A549 (cell line): ENCODE measurements at regions of chr7 and their contacts with region 1.

Region 1: GRCh38 chr7:124152859-124153692 is 120.2 kb upstream of the TMEM229A start:
- DNase-seq: peak; percentile 1 to 46
- ATAC-seq: peak; percentile 78 to 91; a peak in 5 of 6 replicates
- H3K4me3 ChIP-seq: no peak overlapping the region
- H3K27ac ChIP-seq: no peak overlapping the region
- H3K4me1 ChIP-seq: no peaks in the 10 kb centered on the region
- CTCF ChIP-seq: 0 out of 3 replicates have a peak, but pooled peaks have one; percentile 11
- EP300 ChIP-seq: no peak
- POLR2A ChIP-seq: no peak
- RAD21 ChIP-seq: peak in 1 of 2 experiments; percentile 34; a peak in 2 of 5 replicates

Region 2: DNA sequence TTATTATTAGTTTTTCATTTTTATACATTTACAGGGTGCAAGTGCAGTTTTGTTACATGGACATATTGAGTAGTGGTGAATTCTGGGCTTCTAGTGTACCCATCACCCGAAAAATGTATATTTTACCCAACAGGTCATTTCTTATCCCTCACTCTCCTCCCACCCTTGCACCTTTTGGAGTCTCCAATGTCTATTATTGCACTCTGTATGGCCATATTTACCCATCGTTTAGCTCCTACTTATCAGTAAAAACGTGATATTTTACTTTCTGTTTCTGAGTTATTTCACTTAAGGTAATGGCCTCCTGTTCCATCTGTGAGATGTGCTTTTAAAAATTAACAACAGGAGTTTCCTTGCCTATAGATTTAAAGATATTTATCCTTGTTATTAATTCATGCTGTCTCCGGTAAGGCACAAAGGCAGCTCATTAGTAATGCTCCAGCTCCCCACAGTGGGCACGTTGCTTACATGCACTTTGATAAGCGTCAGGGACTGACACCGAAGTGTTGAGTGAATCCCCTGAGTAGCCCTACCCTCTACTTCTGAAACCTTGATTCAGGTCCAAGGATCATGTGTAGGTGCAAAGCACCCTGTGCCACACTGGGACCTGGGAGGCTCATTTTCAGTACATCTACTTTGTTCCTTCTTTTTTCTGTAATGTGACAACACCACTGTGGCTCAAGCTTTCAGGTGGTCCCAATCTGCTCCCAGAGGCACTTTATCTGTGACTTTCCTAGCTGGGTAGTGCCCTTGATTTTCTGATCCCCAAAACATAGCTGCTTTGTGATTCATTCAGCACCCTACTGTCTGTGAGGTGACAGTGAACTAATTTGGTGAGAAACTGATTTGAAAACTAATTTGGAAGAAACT is 280.8 kb before region 1 on chr7:
- CTCF ChIA-PET with region 1: no interaction called
- POLR2A ChIA-PET with region 1: no interaction called
- DNase-seq: peak; percentile 31 to 73
- ATAC-seq: peak; percentile 97 to 99
- H3K4me3 ChIP-seq: no peak overlapping the region
- H3K27ac ChIP-seq: no peak overlapping the region
- H3K4me1 ChIP-seq: no peaks in the 10 kb centered on the region
- CTCF ChIP-seq: peak; percentile 86
- EP300 ChIP-seq: no peak
- POLR2A ChIP-seq: no peak
- RAD21 ChIP-seq: peak; percentile 88 to 90

Region 3: DNA sequence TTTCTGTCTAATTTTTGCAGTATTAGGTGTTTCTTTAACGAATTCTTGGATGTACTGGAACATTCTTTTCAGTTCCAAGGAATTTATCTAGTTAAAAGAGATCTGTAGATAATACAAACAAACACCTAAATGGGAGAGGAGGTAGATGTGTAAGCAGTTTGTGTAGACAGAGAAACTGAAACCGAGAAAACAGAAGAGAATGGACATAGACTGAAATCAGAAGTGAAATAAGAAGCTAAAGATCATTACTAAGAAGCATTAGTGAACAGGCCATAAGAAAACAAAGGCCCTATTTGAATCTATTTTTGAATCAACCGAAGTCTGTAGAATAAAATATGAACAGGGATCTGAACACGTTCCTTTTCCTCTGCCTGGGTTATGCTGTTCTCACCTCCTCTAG is 93.7 kb before region 1 on chr7:
- CTCF ChIA-PET with region 1: no interaction called
- POLR2A ChIA-PET with region 1: no interaction called
- DNase-seq: no peak
- ATAC-seq: no peak
- H3K4me3 ChIP-seq: no peak overlapping the region
- H3K27ac ChIP-seq: no peak overlapping the region
- H3K4me1 ChIP-seq: no peaks in the 10 kb centered on the region
- CTCF ChIP-seq: no peak
- EP300 ChIP-seq: no peak
- POLR2A ChIP-seq: no peak
- RAD21 ChIP-seq: no peak

Region 4: GRCh38 chr7:124784879-124785818 is 632.1 kb after region 1 on chr7:
- CTCF ChIA-PET with region 1: interaction called, 21 read pairs
- POLR2A ChIA-PET with region 1: no interaction called
- DNase-seq: peak; percentile 21 to 62
- ATAC-seq: peak; percentile 77 to 93; a peak in 4 of 6 replicates
- H3K4me3 ChIP-seq: no peak overlapping the region
- H3K27ac ChIP-seq: no peak overlapping the region
- H3K4me1 ChIP-seq: no peaks in the 10 kb centered on the region
- CTCF ChIP-seq: peak; percentile 81
- EP300 ChIP-seq: no peak
- POLR2A ChIP-seq: no peak
- RAD21 ChIP-seq: peak; percentile 88 to 92